Activated CD4-positive, alpha-beta T cell treated with anti-CD3 and anti-CD28 coated beads for 36 hours (primary cell): ENCODE measurements at regions of chr12 and their contacts with region 1.

Region 1: DNA sequence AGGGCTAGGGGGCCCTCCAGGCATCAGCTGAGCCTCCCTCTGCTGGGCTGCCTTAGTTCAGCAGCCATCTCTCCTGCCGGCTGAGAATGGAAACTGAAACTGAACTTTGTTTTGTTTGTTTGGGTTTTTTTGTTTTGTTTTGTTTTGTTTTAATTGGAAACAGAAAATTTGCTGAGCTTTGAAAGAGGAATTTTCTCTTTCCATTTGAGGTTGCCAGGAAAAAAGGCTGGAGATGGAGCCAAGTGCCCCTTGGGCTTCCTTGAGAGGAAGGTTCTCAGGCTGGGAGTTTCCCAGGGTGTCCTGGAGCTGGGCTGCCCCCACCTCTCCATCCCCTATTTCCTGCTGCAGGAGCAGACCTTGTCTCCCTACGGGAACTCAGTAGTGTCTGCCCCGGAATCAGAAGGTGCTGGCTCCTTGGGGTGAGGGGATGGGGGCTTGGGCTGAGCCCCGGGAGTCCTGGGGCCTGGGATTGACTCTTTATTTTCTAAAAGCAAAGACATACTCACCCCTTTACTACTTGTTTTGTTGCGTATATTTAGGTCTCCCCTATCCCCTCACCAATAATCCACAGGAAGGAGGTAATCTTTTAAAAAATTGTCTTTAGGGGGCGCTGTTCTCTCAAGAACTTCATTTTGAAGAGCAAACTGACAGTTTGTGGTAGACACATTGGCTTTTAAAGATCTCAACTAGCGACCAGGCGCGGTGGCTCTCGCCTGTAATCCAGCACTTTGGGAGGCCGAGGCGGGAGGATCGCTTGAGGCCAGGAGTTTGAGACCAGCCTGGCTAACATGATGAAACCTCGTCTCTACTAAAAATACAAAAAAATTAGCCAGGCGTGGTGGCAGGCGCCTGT is 21.3 kb upstream of the OASL start:
- DNase-seq: peak; percentile 79
- ATAC-seq: peak; percentile 91
- H3K4me3 Mint-ChIP-seq: peak overlapping the region; percentile 60
- H3K27ac Mint-ChIP-seq: peak overlapping the region; percentile 90
- H3K4me1 Mint-ChIP-seq: peaks cover 14% of the 10 kb centered on the region
- H3K27me3 Mint-ChIP-seq: no peaks in the 10 kb centered on the region

Region 2: DNA sequence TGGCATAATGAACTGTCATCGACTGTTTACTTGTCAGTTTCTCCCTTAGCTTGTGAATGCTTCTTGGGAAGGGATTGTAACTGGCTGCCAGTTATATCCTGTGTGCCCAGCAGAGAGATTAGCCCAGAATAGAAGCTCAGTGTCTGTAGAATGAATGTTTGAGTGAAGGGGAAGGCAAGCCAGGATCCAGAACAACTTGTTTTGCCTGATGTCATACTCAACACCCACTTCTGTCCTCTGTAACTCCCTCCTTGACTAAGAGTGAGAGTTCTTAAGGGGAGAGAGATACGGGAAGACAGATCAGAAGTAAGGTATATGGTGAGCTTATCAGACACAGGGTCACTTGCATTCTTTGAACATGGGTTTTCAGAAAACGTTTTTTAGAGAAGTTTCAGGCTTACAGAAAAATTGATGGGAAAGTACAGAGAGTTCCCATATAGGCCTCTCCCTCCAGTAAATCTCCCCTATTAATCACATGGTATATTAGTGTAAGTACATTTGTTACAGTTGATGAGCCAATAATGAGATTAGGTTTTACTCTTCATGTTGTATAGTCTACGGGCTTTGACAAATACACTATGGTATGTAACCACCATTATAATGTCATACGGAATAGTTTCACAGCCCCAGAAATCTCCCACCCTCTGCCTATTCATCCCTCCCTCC is 150.6 kb before region 1 on chr12:
- CTCF ChIA-PET with region 1: no interaction called
- POLR2A ChIA-PET with region 1: no interaction called
- intact Hi-C with region 1: no loop called
- DNase-seq: no peak
- ATAC-seq: peak; percentile 51
- H3K4me3 Mint-ChIP-seq: no peak overlapping the region
- H3K27ac Mint-ChIP-seq: no peak overlapping the region
- H3K4me1 Mint-ChIP-seq: peaks cover 3% of the 10 kb centered on the region
- H3K27me3 Mint-ChIP-seq: no peaks in the 10 kb centered on the region

Region 3: DNA sequence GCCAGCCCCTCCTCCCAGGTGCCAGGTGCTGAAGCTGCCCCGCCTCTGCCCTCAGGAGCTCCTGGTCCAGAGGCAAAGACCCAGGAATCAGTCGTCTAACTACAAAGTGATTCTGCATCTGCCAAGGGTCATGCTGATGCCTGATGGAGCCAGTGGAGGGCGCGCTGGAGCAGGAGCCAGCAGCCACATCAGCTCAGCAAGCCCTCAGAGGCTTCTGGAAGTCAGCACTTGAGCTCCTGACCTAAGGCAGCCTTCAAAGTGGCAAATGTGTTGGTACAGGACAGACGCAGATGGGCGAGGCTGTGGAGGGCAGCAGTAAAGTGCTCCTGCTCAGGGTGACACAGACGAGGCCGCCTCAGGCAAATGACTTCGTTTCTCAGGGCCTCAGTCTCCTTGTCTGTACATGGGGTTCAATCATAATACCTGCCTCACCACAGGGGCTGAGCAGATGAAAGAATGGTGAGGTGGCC is 55.0 kb before region 1 on chr12:
- CTCF ChIA-PET with region 1: interaction called, 36 read pairs
- POLR2A ChIA-PET with region 1: no interaction called
- intact Hi-C with region 1: loop called in 1 of 2 experiments (anchors 1 kb)
- DNase-seq: peak; percentile 83
- ATAC-seq: peak; percentile 87
- H3K4me3 Mint-ChIP-seq: no peak overlapping the region
- H3K27ac Mint-ChIP-seq: peak overlapping the region; percentile 31
- H3K4me1 Mint-ChIP-seq: no peaks in the 10 kb centered on the region
- H3K27me3 Mint-ChIP-seq: no peaks in the 10 kb centered on the region

Region 4: GRCh38 chr12:121033625-121034349 is 26.6 kb before region 1 on chr12:
- CTCF ChIA-PET with region 1: interaction called, 13 read pairs
- POLR2A ChIA-PET with region 1: no interaction called
- intact Hi-C with region 1: loop called (anchors 1 to 2 kb)
- DNase-seq: peak; percentile 79
- ATAC-seq: peak; percentile 79
- H3K4me3 Mint-ChIP-seq: peak overlapping the region; percentile 46
- H3K27ac Mint-ChIP-seq: peak overlapping the region; percentile 87
- H3K4me1 Mint-ChIP-seq: peaks cover 59% of the 10 kb centered on the region
- H3K27me3 Mint-ChIP-seq: no peaks in the 10 kb centered on the region

Region 5: DNA sequence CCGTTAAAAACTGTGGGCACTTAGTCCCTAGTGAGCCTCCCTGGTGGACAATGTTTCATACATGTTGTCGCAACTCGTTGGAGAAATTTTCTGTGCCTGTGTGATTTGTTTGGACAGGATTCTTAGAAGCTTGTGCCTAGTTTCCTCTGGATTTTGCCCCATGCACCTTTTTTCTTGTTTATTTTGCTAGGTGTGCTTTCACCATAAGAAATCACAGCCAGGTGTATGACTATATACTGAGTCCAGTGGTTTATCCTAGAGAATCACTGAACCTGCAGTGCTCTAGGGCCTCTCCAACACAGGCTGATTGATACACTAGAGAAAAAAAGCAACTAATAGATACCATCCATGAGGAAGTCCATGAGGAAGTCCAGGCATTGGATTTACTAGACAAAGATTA is 11.8 kb after region 1 on chr12:
- CTCF ChIA-PET with region 1: interaction called, 10 read pairs
- POLR2A ChIA-PET with region 1: no interaction called
- intact Hi-C with region 1: no loop called
- DNase-seq: no peak
- ATAC-seq: no peak
- H3K4me3 Mint-ChIP-seq: no peak overlapping the region
- H3K27ac Mint-ChIP-seq: no peak overlapping the region
- H3K4me1 Mint-ChIP-seq: no peaks in the 10 kb centered on the region
- H3K27me3 Mint-ChIP-seq: no peaks in the 10 kb centered on the region

Region 6: GRCh38 chr12:121102307-121102706 is 41.9 kb after region 1 on chr12:
- CTCF ChIA-PET with region 1: interaction called, 30 read pairs
- POLR2A ChIA-PET with region 1: no interaction called
- intact Hi-C with region 1: no loop called
- DNase-seq: no peak
- ATAC-seq: no peak
- H3K4me3 Mint-ChIP-seq: no peak overlapping the region
- H3K27ac Mint-ChIP-seq: no peak overlapping the region
- H3K4me1 Mint-ChIP-seq: peaks cover 2% of the 10 kb centered on the region
- H3K27me3 Mint-ChIP-seq: peaks cover 2% of the 10 kb centered on the region

Region 7: GRCh38 chr12:121223292-121224285 is 163.2 kb after region 1 on chr12:
- CTCF ChIA-PET with region 1: interaction called, 14 read pairs
- POLR2A ChIA-PET with region 1: no interaction called
- intact Hi-C with region 1: loop called in 1 of 2 experiments (anchors 2 kb)
- DNase-seq: peak; percentile 65
- ATAC-seq: peak; percentile 72
- H3K4me3 Mint-ChIP-seq: no peak overlapping the region
- H3K27ac Mint-ChIP-seq: peak overlapping the region; percentile 75
- H3K4me1 Mint-ChIP-seq: peaks cover 43% of the 10 kb centered on the region
- H3K27me3 Mint-ChIP-seq: no peaks in the 10 kb centered on the region

Region 8: DNA sequence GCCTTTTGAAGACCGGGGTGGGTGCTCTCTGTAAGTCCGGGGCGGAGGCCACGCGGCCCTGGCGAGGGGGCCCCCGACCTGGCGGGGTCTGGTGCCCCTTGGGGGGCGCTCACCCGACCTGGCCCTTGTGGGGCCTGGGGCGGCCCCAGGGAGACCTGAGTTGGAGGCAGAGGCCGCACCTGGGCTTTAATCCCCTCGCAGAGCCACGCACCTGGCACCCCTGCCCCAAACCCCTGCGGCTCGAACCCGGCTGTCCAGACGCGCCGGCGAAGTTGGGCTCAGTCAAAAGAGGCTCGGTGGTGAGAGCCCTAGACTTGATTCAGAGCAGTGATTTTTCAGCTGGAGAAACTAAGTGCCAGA is 858.3 kb after region 1 on chr12:
- CTCF ChIA-PET with region 1: no interaction called
- POLR2A ChIA-PET with region 1: no interaction called
- intact Hi-C with region 1: no loop called
- DNase-seq: peak; percentile 16
- ATAC-seq: no peak
- H3K4me3 Mint-ChIP-seq: peak overlapping the region; percentile 54
- H3K27ac Mint-ChIP-seq: no peak overlapping the region
- H3K4me1 Mint-ChIP-seq: peaks cover 15% of the 10 kb centered on the region
- H3K27me3 Mint-ChIP-seq: no peaks in the 10 kb centered on the region